ENCODE measurements at regions of chr21 and their contacts with region 1.

Region 1: GRCh38 chr21:15713412-15713811 is 16.4 kb upstream of the USP25 start:
- DNase-seq: peak; percentile 15
- ATAC-seq: no peak
- H3K4me3 ChIP-seq: no peak overlapping the region
- H3K27ac ChIP-seq: no peak overlapping the region
- H3K4me1 ChIP-seq: no peaks in the 10 kb centered on the region
- H3K27me3 ChIP-seq: no peaks in the 10 kb centered on the region; the same call in 1 of the 2 replicates
- CTCF ChIP-seq: no peak
- POLR2A ChIP-seq: no peak
- RAD21 ChIP-seq: no peak

Region 2: GRCh38 chr21:15625363-15625762 is 88.0 kb before region 1 on chr21:
- CTCF ChIA-PET with region 1: no interaction called
- POLR2A ChIA-PET with region 1: no interaction called
- dilution Hi-C with region 1: no loop called
- in situ Hi-C with region 1: no loop called
- intact Hi-C with region 1: loop called (anchors 10 kb)
- DNase-seq: no peak
- ATAC-seq: no peak
- H3K4me3 ChIP-seq: no peak overlapping the region
- H3K27ac ChIP-seq: no peak overlapping the region
- H3K4me1 ChIP-seq: no peaks in the 10 kb centered on the region
- H3K27me3 ChIP-seq: no peaks in the 10 kb centered on the region; the same call in 1 of the 2 replicates
- CTCF ChIP-seq: no peak
- POLR2A ChIP-seq: no peak
- RAD21 ChIP-seq: no peak

Region 3: DNA sequence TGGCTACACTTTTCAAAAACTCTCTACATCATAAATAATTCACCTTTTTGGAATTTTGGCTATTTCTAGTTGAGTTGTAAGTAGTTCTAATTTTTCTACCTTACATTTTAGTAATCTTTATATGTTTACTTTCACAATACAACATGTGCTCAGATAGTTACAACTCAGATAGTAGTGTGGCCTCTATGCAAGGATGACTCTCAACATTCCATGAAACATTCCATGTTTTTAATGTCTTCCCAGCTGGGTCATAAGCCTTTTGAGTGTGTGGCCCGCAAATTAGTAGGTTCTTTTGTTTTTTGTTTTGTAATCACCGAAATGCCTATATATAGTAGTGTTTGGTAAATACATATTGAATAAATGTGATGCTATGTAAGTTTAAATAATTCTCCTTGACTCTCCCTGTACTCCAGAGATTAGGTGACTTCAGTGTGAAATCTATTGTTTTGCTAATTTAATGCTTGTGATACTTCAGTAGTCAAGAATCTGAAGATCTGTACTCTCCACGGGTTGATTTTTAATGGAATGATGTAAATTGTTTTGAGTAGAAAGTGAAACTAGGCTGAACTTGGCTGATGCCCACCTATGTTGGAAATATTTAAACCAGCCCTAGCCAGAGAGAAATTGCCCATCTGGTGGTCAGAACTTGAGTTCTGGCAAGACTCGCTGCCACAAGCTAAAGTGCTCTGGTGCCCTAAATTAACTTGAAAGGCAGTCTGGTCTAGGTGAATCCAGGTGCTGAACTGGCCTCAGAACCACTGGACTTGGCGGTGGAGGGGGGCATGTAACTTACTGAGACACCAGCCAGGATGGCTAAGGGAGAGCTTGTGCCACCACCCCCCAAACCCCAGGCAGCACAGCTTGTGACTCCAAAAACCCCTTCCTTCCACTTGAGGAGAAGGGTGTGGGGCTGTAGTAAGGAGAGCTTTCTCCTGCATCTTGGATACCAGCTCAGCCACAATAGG is 182.0 kb after region 1 on chr21:
- CTCF ChIA-PET with region 1: no interaction called
- POLR2A ChIA-PET with region 1: no interaction called
- dilution Hi-C with region 1: no loop called
- in situ Hi-C with region 1: no loop called
- intact Hi-C with region 1: no loop called
- DNase-seq: peak; percentile 2
- ATAC-seq: peak; percentile 65
- H3K4me3 ChIP-seq: no peak overlapping the region
- H3K27ac ChIP-seq: no peak overlapping the region
- H3K4me1 ChIP-seq: peaks cover 2% of the 10 kb centered on the region; the same call in 1 of the 2 replicates
- H3K27me3 ChIP-seq: no peaks in the 10 kb centered on the region
- CTCF ChIP-seq: no peak
- POLR2A ChIP-seq: no peak
- RAD21 ChIP-seq: no peak

Measured in IMR-90 (cell line).